ENCODE measurements at regions of chr7 and their contacts with region 1.

Region 1: GRCh38 chr7:74544706-74545469 is 91.2 kb downstream of the GTF2IRD1 start:
- DNase-seq: no peak
- ATAC-seq: no peak
- H3K4me3 ChIP-seq: no peak overlapping the region
- H3K27ac ChIP-seq: no peak overlapping the region
- H3K4me1 ChIP-seq: peaks cover 0 to 6% (median 0%) of the 10 kb centered on the region in 12 donors
- H3K27me3 ChIP-seq: no peaks in the 10 kb centered on the region
- CTCF ChIP-seq: peak in 8 of 12 donors; percentile 11 to 42 (median 24)
- POLR2A ChIP-seq: no peak

Region 2: GRCh38 chr7:73468097-73468496 is 1076.8 kb before region 1 on chr7:
- intact Hi-C with region 1: no loop called
- DNase-seq: no peak
- ATAC-seq: no peak
- H3K4me3 ChIP-seq: no peak overlapping the region
- H3K27ac ChIP-seq: no peak overlapping the region
- H3K4me1 ChIP-seq: no peaks in the 10 kb centered on the region
- H3K27me3 ChIP-seq: no peaks in the 10 kb centered on the region
- CTCF ChIP-seq: no peak
- POLR2A ChIP-seq: no peak

Region 3: DNA sequence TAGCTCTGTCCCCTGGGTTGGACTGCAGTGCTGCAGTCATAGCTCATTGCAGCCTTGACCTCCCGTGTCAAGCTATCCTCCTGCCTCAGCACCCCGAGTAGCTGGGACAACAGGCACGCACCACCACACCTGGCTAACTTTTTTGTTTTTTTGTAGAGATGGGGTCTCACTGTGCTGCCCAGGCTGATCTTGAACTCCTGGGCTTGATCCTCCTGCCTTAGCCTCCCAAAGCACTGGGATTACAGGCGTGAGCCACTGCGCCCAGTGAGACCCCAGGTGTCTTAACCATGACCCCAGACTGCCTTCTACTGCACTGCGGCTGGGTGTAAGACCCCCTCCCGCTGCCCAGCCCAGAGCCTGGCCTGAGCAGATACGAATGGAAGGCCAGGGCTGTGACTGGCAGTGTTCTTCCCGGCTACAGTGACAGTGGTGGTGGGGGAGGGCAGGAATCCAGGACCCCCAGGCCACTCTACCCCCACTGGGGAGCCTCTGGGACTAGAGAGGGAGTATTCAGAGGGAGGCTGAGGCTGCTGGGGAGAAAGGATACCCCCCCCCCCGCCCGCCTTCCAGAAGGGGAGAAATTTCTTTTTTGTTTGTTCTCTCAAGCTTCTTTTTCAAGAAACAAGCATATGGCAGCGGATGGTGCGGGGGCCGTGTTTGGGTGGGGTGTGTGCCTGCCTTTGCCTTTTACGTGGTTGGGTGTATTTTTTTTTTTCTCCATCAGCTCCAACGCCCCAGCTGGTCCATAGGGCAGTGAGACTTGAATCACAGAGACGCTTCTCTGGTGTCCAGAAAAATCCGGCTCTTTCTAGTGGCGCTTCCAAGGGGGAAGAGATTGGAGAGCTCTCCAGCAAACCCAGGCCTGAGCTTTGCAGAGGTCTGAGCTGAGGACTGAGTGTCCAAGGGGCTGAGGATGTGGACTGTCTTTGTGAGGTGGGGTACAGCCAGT is 54.6 kb before region 1 on chr7:
- intact Hi-C with region 1: loop called in 1 of 10 experiments (anchors 5 kb)
- DNase-seq: no peak
- ATAC-seq: peak in 1 of 4 donors; percentile 12
- H3K4me3 ChIP-seq: no peak overlapping the region
- H3K27ac ChIP-seq: no peak overlapping the region
- H3K4me1 ChIP-seq: peaks cover 0 to 4% (median 0%) of the 10 kb centered on the region in 12 donors
- H3K27me3 ChIP-seq: no peaks in the 10 kb centered on the region
- CTCF ChIP-seq: no peak
- POLR2A ChIP-seq: no peak

Region 4: GRCh38 chr7:74633451-74633921 is 88.6 kb after region 1 on chr7:
- intact Hi-C with region 1: no loop called
- DNase-seq: no peak
- ATAC-seq: no peak
- H3K4me3 ChIP-seq: no peak overlapping the region
- H3K27ac ChIP-seq: no peak overlapping the region
- H3K4me1 ChIP-seq: peaks cover 0 to 11% (median 5%) of the 10 kb centered on the region in 12 donors
- H3K27me3 ChIP-seq: no peaks in the 10 kb centered on the region
- CTCF ChIP-seq: no peak
- POLR2A ChIP-seq: no peak

Measured in heart left ventricle (tissue), 16 donors.